Heart right ventricle (tissue), 16 donors: ENCODE measurements at regions of chr16 and their contacts with region 1.

Region 1: DNA sequence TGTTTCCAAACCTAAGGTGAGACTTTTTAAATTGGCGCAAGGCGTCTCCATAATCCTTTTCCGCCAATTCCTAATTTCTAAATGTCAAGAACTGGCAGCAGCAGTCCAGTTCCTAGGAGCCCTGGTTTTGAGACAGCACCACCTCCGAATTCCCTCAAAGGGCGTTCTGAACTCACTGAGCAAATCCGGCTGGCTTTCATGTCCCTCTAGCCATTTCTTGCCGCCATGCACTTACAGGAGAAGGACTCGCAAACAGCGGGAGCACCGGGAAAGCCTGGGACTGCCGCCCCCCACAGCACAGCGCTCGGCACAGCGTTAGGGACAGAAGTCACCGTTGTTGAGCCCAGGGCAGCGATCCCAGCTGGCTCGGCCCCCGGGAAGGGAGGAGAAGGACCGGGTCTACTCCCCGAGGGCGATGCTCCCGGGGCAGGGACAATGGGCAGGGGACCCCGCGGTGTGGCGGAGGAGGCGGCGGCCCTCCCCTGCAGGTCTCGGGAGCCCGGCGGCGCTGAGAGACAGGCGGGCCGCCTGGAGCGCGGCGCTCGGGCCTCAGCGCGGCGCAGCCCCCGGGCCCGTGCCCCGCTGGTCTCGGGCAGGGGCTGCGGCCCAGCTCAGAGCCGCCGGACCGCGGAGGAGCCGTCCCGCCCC is 545 bp downstream of the ARHGAP17 start:
- DNase-seq: peak; percentile 51 to 61
- ATAC-seq: peak; percentile 32 to 57 (median 48)
- H3K4me3 ChIP-seq: peak overlapping the region; percentile 66 to 93 (median 87)
- H3K27ac ChIP-seq: peak overlapping the region; percentile 92 to 99 (median 96)
- H3K4me1 ChIP-seq: peaks cover 3 to 73% (median 53%) of the 10 kb centered on the region in 9 donors
- H3K27me3 ChIP-seq: no peaks in the 10 kb centered on the region
- CTCF ChIP-seq: peak in 3 of 9 donors; percentile 6 to 22 (median 20)

Region 2: DNA sequence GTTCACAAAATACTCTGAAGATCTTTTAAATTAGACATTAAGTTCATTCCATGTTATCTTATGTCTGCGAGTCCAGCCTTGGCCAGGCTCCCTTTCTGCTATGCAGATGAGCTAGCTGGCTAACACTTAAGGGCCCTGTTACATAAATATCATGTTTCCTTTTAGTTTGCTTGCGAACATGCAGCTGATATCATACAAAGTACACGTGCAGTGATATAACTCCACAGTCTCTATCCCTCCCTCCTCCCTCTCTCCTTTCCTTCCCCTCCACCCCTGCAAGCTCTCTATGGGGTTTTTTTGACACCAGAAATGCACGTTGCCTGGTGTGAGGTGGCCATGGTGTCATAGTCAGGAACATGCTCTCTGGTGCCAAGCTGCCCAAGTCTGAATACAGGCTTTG is 45.6 kb before region 1 on chr16:
- intact Hi-C with region 1: loop called in 2 of 10 experiments (anchors 10 kb)
- DNase-seq: no peak
- ATAC-seq: peak in 7 of 8 donors; percentile 7 to 60 (median 58)
- H3K4me3 ChIP-seq: no peak overlapping the region
- H3K27ac ChIP-seq: peak overlapping the region in 5 of 10 donors; percentile 11 to 90 (median 44)
- H3K4me1 ChIP-seq: peaks cover 2 to 53% (median 30%) of the 10 kb centered on the region in 9 donors
- H3K27me3 ChIP-seq: no peaks in the 10 kb centered on the region
- CTCF ChIP-seq: no peak

Region 3: DNA sequence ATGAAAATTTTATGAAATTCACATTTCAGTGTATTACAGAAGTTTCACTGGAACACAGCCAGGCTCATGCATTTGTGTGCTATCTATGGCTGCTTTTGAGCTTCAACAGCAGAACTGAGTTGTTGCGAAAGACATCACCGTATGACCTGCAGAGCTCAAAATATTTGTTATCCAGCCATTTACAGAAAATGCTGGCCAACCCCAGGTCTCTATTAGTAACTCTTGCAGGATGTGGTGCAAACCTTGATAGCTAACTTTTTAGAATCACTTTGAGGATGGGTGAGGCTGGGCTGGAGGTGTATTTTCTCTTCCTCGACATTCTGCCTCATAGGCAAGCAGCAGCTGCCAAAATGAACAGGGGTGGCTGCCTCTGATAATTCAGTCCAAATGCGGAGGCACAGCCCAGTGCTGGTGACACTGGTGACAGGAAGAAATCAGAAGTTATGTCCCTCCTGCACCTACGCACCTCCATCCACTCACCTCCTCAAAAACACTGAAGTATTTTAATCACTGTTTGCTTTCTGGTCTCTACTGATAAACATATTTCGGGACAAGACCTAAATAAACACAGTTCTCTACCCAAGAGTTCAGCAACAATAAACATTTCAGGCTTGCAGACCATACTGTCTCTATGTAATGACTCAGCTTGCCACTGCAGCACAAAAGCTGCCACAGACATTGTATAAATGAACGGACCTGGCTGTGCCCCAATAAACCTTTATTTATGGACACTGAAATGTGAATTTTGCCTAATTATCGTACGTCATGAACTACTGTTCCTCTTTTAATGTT is 27.9 kb before region 1 on chr16:
- intact Hi-C with region 1: loop called in 1 of 10 experiments (anchors 2 kb)
- DNase-seq: peak in 1 of 2 donors; percentile 38
- ATAC-seq: peak; percentile 40 to 78 (median 69)
- H3K4me3 ChIP-seq: peak overlapping the region in 5 of 10 donors; percentile 1 to 13 (median 7)
- H3K27ac ChIP-seq: peak overlapping the region; percentile 71 to 90 (median 78)
- H3K4me1 ChIP-seq: peaks cover 30 to 99% (median 96%) of the 10 kb centered on the region in 9 donors
- H3K27me3 ChIP-seq: no peaks in the 10 kb centered on the region
- CTCF ChIP-seq: no peak

Region 4: GRCh38 chr16:25045696-25046381 is 31.2 kb after region 1 on chr16:
- intact Hi-C with region 1: loop called in 4 of 10 experiments (anchors 2 to 5 kb)
- DNase-seq: no peak
- ATAC-seq: no peak
- H3K4me3 ChIP-seq: no peak overlapping the region
- H3K27ac ChIP-seq: no peak overlapping the region
- H3K4me1 ChIP-seq: peaks cover 0 to 31% (median 15%) of the 10 kb centered on the region in 9 donors
- H3K27me3 ChIP-seq: no peaks in the 10 kb centered on the region
- CTCF ChIP-seq: no peak

Region 5: GRCh38 chr16:25509456-25509855 is 494.8 kb after region 1 on chr16:
- intact Hi-C with region 1: no loop called
- DNase-seq: no peak
- ATAC-seq: no peak
- H3K4me3 ChIP-seq: no peak overlapping the region
- H3K27ac ChIP-seq: no peak overlapping the region
- H3K4me1 ChIP-seq: no peaks in the 10 kb centered on the region
- H3K27me3 ChIP-seq: peaks cover 0 to 5% (median 0%) of the 10 kb centered on the region in 7 donors
- CTCF ChIP-seq: no peak